ENCODE measurements at regions of chr13 and their contacts with region 1.

Region 1: GRCh38 chr13:26707122-26708006 is 53.2 kb downstream of the GPR12 start:
- ATAC-seq: peak; percentile 77 to 95 (median 88)
- H3K4me3 ChIP-seq: no peak overlapping the region
- H3K27ac ChIP-seq: no peak overlapping the region
- H3K4me1 ChIP-seq: no peaks in the 10 kb centered on the region

Region 2: DNA sequence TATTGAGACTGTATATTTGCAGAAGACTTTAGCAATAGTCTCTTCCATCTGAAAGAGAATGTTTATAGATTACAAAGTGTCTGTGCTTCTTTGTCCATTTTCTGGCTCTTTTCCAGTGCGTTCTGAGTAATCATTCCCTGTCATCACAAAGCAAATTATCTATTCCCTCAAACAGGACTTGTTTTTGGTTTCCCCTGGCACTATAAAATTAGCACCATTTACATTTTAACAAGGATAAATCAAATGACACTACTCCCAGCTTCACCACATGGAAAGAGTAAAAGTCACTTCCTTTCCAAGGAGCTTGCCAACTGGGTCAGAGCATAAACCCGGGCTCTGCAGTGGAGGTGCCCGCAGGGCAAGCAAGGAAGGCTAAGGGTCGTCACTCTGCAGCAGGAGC is 743.7 kb before region 1 on chr13:
- in situ Hi-C with region 1: no loop called
- ATAC-seq: peak in 2 of 8 experiments; percentile 55 to 59
- H3K4me3 ChIP-seq: no peak overlapping the region
- H3K27ac ChIP-seq: no peak overlapping the region
- H3K4me1 ChIP-seq: no peaks in the 10 kb centered on the region

Region 3: DNA sequence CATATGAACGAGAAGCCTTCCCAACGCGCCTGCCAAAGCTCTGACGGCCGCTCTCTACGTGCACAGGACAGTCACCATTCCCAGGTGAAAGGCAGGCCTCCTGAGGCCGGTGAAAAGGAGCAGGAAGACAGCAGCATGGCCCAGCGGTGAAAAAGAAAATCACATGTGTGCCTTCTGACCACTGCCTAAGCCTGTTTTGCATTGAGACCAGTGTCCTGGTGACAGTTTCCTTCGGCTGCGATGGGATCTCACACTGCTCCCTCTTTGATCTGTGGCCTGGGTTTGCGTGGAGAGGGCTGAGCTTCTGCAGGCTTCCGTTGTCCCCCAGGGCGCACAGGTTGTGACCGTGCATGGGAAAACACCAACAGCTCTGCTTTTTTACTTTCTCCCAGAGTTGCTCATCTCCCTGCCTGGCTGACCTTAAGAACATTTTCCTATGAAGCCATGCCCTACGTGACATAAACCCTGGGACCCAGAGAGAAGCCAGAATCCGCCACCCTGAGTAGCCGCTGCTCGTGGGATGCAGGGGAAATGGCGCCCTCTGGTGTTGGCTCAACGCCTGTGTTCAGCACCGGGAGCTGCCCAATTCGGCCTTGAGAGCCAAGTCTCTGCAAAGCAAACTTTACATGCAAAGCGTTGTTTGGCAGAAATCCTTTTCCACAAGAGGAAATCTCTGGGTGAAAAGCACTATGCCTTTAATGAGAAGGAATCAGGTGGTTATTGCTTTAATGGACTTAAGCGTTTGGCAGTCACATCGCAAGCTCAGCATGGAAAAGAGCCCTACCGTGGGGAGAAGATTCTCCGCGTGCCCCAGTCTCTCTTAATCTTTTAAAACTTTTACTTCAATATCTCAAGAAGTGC is 165.4 kb after region 1 on chr13:
- in situ Hi-C with region 1: loop called in 4 of 9 experiments (anchors 10 to 25 kb)
- ATAC-seq: peak; percentile 44 to 93 (median 76)
- H3K4me3 ChIP-seq: no peak overlapping the region
- H3K27ac ChIP-seq: no peak overlapping the region
- H3K4me1 ChIP-seq: peaks cover 0 to 9% of the 10 kb centered on the region in 2 donors

Region 4: DNA sequence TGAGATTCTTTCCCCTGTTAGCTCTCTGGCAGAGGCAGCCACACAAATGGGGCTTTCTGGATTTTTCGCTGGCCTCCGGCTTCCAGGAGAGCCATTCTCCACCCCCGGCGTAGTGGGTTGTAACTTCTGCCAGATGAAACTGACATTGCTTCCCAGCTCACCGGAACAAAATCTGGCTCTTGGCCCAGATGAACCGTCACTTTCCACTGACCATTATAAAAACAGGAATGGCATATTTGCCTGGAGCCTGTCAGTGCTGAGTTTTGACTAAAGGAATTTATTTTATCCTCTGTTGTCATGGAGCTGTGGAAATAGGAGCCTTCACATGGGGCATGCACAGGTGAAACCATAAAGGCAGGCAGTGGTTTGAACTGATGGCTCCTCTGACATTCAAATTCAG is 173.8 kb after region 1 on chr13:
- in situ Hi-C with region 1: loop called in 4 of 9 experiments (anchors 10 to 25 kb)
- ATAC-seq: peak in 3 of 8 experiments; percentile 8 to 80 (median 78)
- H3K4me3 ChIP-seq: no peak overlapping the region
- H3K27ac ChIP-seq: no peak overlapping the region
- H3K4me1 ChIP-seq: peaks cover 0 to 4% of the 10 kb centered on the region in 2 donors

Region 5: DNA sequence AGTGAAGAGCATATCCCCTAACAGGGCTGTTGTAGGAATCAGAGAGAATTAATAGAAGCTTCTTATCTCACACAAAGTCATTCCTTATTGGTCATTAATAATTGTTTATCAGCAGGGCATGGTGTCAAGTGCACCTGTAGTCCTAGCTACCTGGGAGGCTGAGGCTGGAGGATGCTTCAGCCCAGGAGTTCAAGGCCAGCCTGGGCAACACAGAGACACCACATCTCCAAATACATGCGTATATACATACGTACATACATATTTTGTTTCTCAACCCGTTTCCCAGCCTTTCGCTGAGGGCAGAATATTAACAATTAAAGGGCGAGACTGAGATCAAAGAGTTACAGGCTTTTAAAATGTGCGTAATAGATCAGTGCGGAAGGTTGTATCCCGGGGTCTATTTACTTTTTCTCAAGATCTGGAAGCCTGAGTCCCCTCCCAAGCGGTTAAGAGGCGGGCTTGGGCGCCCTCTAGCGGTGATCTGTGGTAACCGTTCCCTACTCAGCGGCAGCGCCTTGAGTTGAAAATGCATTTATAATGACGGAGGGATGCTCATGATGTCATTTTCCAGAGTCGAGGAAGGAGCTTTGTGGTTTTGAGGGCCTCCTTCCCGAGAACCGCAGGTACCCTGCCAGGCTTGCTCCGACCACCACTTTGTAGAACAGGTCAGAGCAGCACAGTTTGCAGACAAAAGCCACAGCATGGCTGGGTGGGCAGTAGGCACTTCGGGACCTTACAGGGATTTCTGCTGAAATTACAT is 222.8 kb after region 1 on chr13:
- in situ Hi-C with region 1: loop called in 2 of 9 experiments (anchors 10 kb)
- ATAC-seq: peak; percentile 82 to 99 (median 98)
- H3K4me3 ChIP-seq: peak overlapping the region; percentile 5 to 19 (median 8)
- H3K27ac ChIP-seq: no peak overlapping the region
- H3K4me1 ChIP-seq: no peaks in the 10 kb centered on the region